ENCODE measurements at regions of chr7 and their contacts with region 1.

Region 1: GRCh38 chr7:99392677-99393354 is 15.6 kb downstream of the PDAP1 start:
- DNase-seq: peak; percentile 84
- ATAC-seq: peak; percentile 90
- H3K4me3 Mint-ChIP-seq: peak overlapping the region; percentile 69
- H3K27ac Mint-ChIP-seq: peak overlapping the region; percentile 82
- H3K4me1 Mint-ChIP-seq: peaks cover 13% of the 10 kb centered on the region
- H3K27me3 Mint-ChIP-seq: no peaks in the 10 kb centered on the region

Region 2: DNA sequence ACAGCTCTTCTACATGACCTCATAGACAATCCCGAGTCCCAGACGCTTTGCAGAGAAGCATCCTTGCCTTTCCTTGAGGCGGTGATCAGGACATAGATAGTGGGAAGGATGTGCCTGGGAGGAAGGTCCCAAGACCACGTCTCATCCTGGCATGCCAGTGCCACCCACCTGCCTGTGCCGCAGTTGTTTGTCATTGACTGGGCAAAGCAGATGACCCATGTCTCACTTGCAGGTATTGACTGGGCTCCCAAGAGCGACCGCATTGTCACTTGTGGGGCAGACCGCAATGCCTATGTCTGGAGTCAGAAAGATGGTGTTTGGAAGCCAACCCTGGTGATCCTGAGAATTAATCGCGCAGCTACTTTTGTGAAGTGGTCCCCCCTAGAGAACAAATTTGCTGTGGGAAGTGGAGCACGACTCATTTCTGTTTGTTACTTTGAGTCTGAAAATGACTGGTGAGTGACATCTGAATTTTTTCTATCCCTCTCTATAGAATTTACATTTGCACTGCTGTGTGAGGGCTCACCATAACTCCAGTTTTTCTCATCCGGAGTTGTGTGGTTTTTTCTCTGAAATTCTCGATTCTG is 48.7 kb before region 1 on chr7:
- POLR2A ChIA-PET with region 1: no interaction called
- DNase-seq: no peak
- ATAC-seq: no peak
- H3K4me3 Mint-ChIP-seq: no peak overlapping the region
- H3K27ac Mint-ChIP-seq: no peak overlapping the region
- H3K4me1 Mint-ChIP-seq: peaks cover 6% of the 10 kb centered on the region
- H3K27me3 Mint-ChIP-seq: no peaks in the 10 kb centered on the region

Region 3: GRCh38 chr7:99374103-99375064 is 18.4 kb before region 1 on chr7 and contains the start of gene ARPC1B:
- POLR2A ChIA-PET with region 1: interaction called, 35 read pairs
- DNase-seq: peak; percentile 84
- ATAC-seq: peak; percentile 56
- H3K4me3 Mint-ChIP-seq: peak within 1 kb of the TSS; percentile 87
- H3K27ac Mint-ChIP-seq: peak within 1 kb of the TSS; percentile 78
- H3K4me1 Mint-ChIP-seq: peaks cover 33% of the 10 kb centered on the region
- H3K27me3 Mint-ChIP-seq: peaks cover 2% of the 10 kb centered on the region
- total RNA-seq, gene ARPC1B: 318 to 319 TPM

Region 4: GRCh38 chr7:99380032-99380822 is 12.6 kb before region 1 on chr7:
- POLR2A ChIA-PET with region 1: interaction called, 35 read pairs
- DNase-seq: no peak
- ATAC-seq: peak; percentile 9
- H3K4me3 Mint-ChIP-seq: peak overlapping the region; percentile 85
- H3K27ac Mint-ChIP-seq: peak overlapping the region; percentile 96
- H3K4me1 Mint-ChIP-seq: peaks cover 42% of the 10 kb centered on the region
- H3K27me3 Mint-ChIP-seq: no peaks in the 10 kb centered on the region

Region 5: DNA sequence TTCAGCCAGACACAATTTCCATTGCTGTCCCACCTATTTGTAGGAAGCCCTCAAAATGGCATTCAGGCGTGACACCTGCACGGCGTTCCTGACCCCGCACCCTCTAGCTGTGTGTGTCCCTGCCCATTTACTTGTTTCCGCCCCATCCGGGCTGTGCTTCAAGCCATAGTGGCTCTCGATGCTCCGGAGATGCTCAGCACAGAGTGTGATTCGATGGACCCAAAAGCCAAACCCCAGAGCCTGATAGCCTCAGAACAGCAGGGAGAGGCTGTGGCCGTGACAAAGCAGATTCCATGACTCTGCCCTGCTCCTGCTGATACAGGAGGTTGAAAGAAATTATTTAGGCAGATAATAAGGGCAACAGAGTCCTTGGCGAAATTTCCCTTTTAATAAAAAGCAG is 29.4 kb after region 1 on chr7:
- POLR2A ChIA-PET with region 1: no interaction called
- DNase-seq: no peak
- ATAC-seq: no peak
- H3K4me3 Mint-ChIP-seq: no peak overlapping the region
- H3K27ac Mint-ChIP-seq: no peak overlapping the region
- H3K4me1 Mint-ChIP-seq: peaks cover 3% of the 10 kb centered on the region
- H3K27me3 Mint-ChIP-seq: no peaks in the 10 kb centered on the region